T-cell (primary cell): ENCODE measurements at regions of chr2 and their contacts with region 1.

Region 1: DNA sequence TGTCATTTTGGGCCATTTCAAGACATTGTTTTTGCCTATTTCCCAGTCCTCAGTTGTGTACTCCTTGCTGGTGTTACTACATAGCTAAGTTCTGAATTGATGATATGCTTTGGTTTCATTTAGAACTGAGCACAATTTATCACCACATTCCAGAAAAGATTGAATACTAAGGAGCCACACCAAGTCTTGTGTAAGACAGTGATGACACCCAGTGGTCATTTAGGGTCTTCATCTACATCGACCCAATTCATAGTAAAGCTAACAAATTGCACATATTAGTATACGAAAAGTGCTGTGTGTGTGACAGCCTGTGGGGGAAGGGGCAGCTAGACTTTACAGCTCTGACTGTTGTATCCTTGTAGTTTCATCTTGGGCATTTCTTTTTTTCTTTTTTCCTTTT is 10.9 kb upstream of the DLX2 start:
- DNase-seq: peak in 1 of 35 experiments; percentile 34
- ATAC-seq: no peak
- H3K4me3 ChIP-seq: no peak overlapping the region
- H3K4me3 Mint-ChIP-seq: no peak overlapping the region
- H3K27ac ChIP-seq: no peak overlapping the region
- H3K27ac Mint-ChIP-seq: no peak overlapping the region
- H3K4me1 ChIP-seq: peaks cover under 1 to 4% of the 10 kb centered on the region in 2 experiments
- H3K4me1 Mint-ChIP-seq: peaks cover 5 to 6% (median 6%) of the 10 kb centered on the region in 3 donors
- H3K27me3 ChIP-seq: peaks cover 2 to 32% of the 10 kb centered on the region in 2 experiments
- H3K27me3 Mint-ChIP-seq: peaks cover 30 to 48% of the 10 kb centered on the region in 2 donors

Region 2: DNA sequence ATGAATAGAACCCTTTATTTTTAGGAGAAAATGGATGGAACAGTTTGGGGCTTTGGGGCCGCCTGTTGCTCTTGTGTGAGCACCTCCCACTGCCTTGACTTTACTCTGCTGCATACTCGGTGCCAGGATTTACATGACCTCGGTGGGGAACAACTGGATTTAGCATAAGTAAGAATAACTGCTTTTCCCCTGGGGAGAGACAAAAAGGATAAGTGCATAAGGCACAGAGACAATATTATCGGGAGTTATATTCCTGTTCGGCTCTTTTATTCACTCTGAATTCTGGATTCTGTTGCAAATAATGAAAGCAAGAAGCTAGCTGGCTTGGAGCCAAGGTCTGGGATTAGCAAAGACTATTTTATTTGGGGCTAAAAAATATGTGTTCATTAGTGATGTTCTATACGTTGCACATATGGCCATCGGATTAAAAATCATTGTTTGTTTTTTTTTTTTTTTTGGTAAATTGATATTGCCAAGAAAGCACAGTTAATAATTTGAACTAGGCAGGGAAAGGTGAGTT is 521.5 kb before region 1 on chr2:
- CTCF ChIA-PET with region 1: interaction called in 1 of 2 experiments, 10 read pairs
- POLR2A ChIA-PET with region 1: no interaction called
- DNase-seq: no peak
- ATAC-seq: no peak
- H3K4me3 ChIP-seq: no peak overlapping the region
- H3K4me3 Mint-ChIP-seq: no peak overlapping the region
- H3K27ac ChIP-seq: no peak overlapping the region
- H3K27ac Mint-ChIP-seq: no peak overlapping the region
- H3K4me1 ChIP-seq: no peaks in the 10 kb centered on the region
- H3K4me1 Mint-ChIP-seq: no peaks in the 10 kb centered on the region
- H3K27me3 ChIP-seq: peaks cover 0 to 5% of the 10 kb centered on the region in 2 experiments
- H3K27me3 Mint-ChIP-seq: peaks cover 5 to 18% of the 10 kb centered on the region in 2 donors